ENCODE measurements at regions of chr16 and their contacts with region 1.

Region 1: GRCh38 chr16:89720813-89721545 is at the starts of genes VPS9D1 and ZNF276:
- DNase-seq: peak; percentile 74
- H3K4me3 ChIP-seq: peak within 1 kb of the TSS; percentile 72 to 97
- H3K27ac ChIP-seq: peak within 1 kb of the TSS; percentile 91 to 98
- H3K4me1 ChIP-seq: peaks cover 17% of the 10 kb centered on the region
- H3K27me3 ChIP-seq: no peaks in the 10 kb centered on the region
- CTCF ChIP-seq: no peak
- POLR2A ChIP-seq: no peak
- total RNA-seq, gene VPS9D1: 8.5 to 16.0 TPM
- total RNA-seq, gene ZNF276: 18.4 to 46.1 TPM

Region 2: GRCh38 chr16:89289428-89290395 is 431.3 kb before region 1 on chr16:
- intact Hi-C with region 1: no loop called
- DNase-seq: peak; percentile 47
- H3K4me3 ChIP-seq: no peak overlapping the region
- H3K27ac ChIP-seq: no peak overlapping the region
- H3K4me1 ChIP-seq: no peaks in the 10 kb centered on the region
- H3K27me3 ChIP-seq: no peaks in the 10 kb centered on the region
- CTCF ChIP-seq: peak; percentile 46 to 77 (median 66)
- POLR2A ChIP-seq: no peak

Region 3: GRCh38 chr16:89873972-89874689 is 153.2 kb after region 1 on chr16:
- intact Hi-C with region 1: loop called (anchors 5 kb)
- DNase-seq: peak; percentile 96
- H3K4me3 ChIP-seq: peak overlapping the region; percentile 65 to 88
- H3K27ac ChIP-seq: peak overlapping the region; percentile 97 to 100
- H3K4me1 ChIP-seq: peaks cover 5% of the 10 kb centered on the region
- H3K27me3 ChIP-seq: no peaks in the 10 kb centered on the region
- CTCF ChIP-seq: no peak
- POLR2A ChIP-seq: no peak

Measured in prostate gland (tissue), 2 donors.